ENCODE measurements at regions of chr1 and their contacts with region 1.

Region 1: GRCh38 chr1:83055410-83056134 is 943.4 kb downstream of the TTLL7 start:
- DNase-seq: peak; percentile 66 to 68
- H3K4me3 ChIP-seq: no peak overlapping the region
- H3K4me3 Mint-ChIP-seq: peak overlapping the region; percentile 27
- H3K27ac Mint-ChIP-seq: peak overlapping the region; percentile 75
- H3K4me1 ChIP-seq: peaks cover 30% of the 10 kb centered on the region
- H3K4me1 Mint-ChIP-seq: peaks cover 19% of the 10 kb centered on the region
- H3K27me3 ChIP-seq: no peaks in the 10 kb centered on the region
- H3K27me3 Mint-ChIP-seq: no peaks in the 10 kb centered on the region
- CTCF ChIP-seq: no peak

Region 2: GRCh38 chr1:82950606-82951200 is 104.9 kb before region 1 on chr1:
- CTCF ChIA-PET with region 1: no interaction called
- POLR2A ChIA-PET with region 1: no interaction called
- intact Hi-C with region 1: no loop called
- DNase-seq: no peak
- H3K4me3 ChIP-seq: no peak overlapping the region
- H3K4me3 Mint-ChIP-seq: no peak overlapping the region
- H3K27ac Mint-ChIP-seq: no peak overlapping the region
- H3K4me1 ChIP-seq: no peaks in the 10 kb centered on the region
- H3K4me1 Mint-ChIP-seq: no peaks in the 10 kb centered on the region
- H3K27me3 ChIP-seq: no peaks in the 10 kb centered on the region
- H3K27me3 Mint-ChIP-seq: no peaks in the 10 kb centered on the region
- CTCF ChIP-seq: no peak

Region 3: DNA sequence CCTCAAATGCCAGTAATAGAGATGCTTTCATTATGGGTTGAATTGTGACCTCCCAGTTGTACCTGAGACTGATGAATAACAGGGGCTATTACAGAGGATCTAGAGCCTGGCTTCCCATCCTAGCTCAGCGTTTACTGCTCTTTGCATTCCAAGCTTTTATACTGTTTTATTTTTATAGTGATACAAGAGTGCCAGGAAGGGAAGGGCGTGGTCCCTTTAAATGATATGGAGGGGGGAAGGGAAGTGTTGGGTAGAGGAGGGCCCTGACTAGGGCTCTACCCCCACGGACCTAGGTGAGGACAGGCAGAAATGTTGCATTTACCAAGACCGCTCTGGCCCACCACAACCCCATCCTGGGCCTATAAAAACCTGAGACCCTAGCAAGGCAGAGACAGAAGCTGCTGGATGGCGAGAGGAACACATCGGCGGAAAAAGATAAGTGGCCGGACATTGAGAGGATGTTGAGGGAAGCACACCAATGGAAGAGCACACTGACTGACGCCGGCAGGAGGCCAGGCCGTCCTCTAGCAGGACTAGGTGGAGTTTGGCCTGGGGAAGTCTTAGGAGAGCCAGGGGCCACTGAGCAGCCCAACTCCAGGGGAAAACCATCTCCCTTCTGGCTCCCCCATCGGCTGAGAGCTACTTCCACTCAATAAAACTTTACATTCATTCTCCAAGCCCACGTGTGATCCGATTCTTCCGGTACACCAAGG is 82.6 kb before region 1 on chr1:
- CTCF ChIA-PET with region 1: no interaction called
- POLR2A ChIA-PET with region 1: no interaction called
- intact Hi-C with region 1: no loop called
- DNase-seq: no peak
- H3K4me3 ChIP-seq: no peak overlapping the region
- H3K4me3 Mint-ChIP-seq: no peak overlapping the region
- H3K27ac Mint-ChIP-seq: no peak overlapping the region
- H3K4me1 ChIP-seq: no peaks in the 10 kb centered on the region
- H3K4me1 Mint-ChIP-seq: no peaks in the 10 kb centered on the region
- H3K27me3 ChIP-seq: no peaks in the 10 kb centered on the region
- H3K27me3 Mint-ChIP-seq: no peaks in the 10 kb centered on the region
- CTCF ChIP-seq: no peak

Region 4: GRCh38 chr1:83034851-83035250 is 20.7 kb before region 1 on chr1:
- CTCF ChIA-PET with region 1: no interaction called
- POLR2A ChIA-PET with region 1: no interaction called
- intact Hi-C with region 1: loop called (anchors 1 kb)
- DNase-seq: no peak
- H3K4me3 ChIP-seq: no peak overlapping the region
- H3K4me3 Mint-ChIP-seq: no peak overlapping the region
- H3K27ac Mint-ChIP-seq: no peak overlapping the region
- H3K4me1 ChIP-seq: no peaks in the 10 kb centered on the region
- H3K4me1 Mint-ChIP-seq: no peaks in the 10 kb centered on the region
- H3K27me3 ChIP-seq: no peaks in the 10 kb centered on the region
- H3K27me3 Mint-ChIP-seq: no peaks in the 10 kb centered on the region
- CTCF ChIP-seq: no peak

Region 5: DNA sequence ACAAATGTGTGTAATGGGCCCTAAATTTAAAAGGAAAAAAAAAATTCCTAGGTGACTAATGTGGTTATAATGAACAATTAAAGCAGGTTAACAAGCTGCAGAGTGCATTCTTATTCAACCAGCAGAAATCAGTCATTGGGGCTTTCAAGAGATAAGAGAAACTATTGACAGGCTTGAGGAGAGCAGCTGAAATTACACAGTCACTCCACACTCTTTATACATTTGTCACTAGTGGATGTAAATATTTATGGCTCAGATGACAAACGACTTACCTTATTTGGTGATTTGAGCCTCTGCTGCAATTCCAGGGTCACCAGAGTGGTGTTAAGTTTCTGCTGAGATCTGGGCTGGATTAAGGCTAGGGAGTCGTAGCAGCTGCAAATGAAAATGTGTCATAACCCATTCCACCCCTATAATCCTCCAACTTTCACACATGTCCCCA is 47.1 kb after region 1 on chr1:
- CTCF ChIA-PET with region 1: no interaction called
- POLR2A ChIA-PET with region 1: no interaction called
- intact Hi-C with region 1: loop called (anchors 2 kb)
- DNase-seq: no peak
- H3K4me3 ChIP-seq: no peak overlapping the region
- H3K4me3 Mint-ChIP-seq: no peak overlapping the region
- H3K27ac Mint-ChIP-seq: no peak overlapping the region
- H3K4me1 ChIP-seq: no peaks in the 10 kb centered on the region
- H3K4me1 Mint-ChIP-seq: no peaks in the 10 kb centered on the region
- H3K27me3 ChIP-seq: no peaks in the 10 kb centered on the region
- H3K27me3 Mint-ChIP-seq: no peaks in the 10 kb centered on the region
- CTCF ChIP-seq: no peak

Measured in Caco-2 (cell line).